Pancreas (tissue), 10 donors: ENCODE measurements at regions of chr6 and their contacts with region 1.

Region 1: GRCh38 chr6:132483779-132484679 is 28.9 kb downstream of the STX7 start:
- DNase-seq: peak in 1 of 6 donors; percentile 36
- ATAC-seq: peak; percentile 60 to 95 (median 90)
- H3K4me3 ChIP-seq: no peak overlapping the region
- H3K27ac ChIP-seq: no peak overlapping the region
- H3K4me1 ChIP-seq: peaks cover 0 to 3% (median 0%) of the 10 kb centered on the region in 3 donors
- H3K27me3 ChIP-seq: no peaks in the 10 kb centered on the region
- CTCF ChIP-seq: peak; percentile 50 to 70 (median 58)

Region 2: GRCh38 chr6:132279592-132280139 is 204.4 kb before region 1 on chr6:
- intact Hi-C with region 1: loop called in 2 of 3 experiments (anchors 10 kb)
- DNase-seq: peak; percentile 51 to 84 (median 72)
- ATAC-seq: peak; percentile 93 to 98 (median 96)
- H3K4me3 ChIP-seq: peak overlapping the region in 2 of 4 donors; percentile 27 to 36
- H3K27ac ChIP-seq: peak overlapping the region in 1 of 4 donors; percentile 52
- H3K4me1 ChIP-seq: no peaks in the 10 kb centered on the region
- H3K27me3 ChIP-seq: no peaks in the 10 kb centered on the region
- CTCF ChIP-seq: peak; percentile 62 to 79 (median 77)